HEK293T (cell line): ENCODE measurements at regions of chr6 and their contacts with region 1.

Region 1: GRCh38 chr6:1630771-1631217 is 21.1 kb downstream of the FOXC1 start:
- DNase-seq: no peak

Region 2: GRCh38 chr6:1619673-1620503 is 10.9 kb before region 1 on chr6:
- CTCF ChIA-PET with region 1: interaction called, 11 read pairs
- POLR2A ChIA-PET with region 1: interaction called, 74 read pairs
- DNase-seq: no peak